AG04450 (cell line): ENCODE measurements at regions of chr1 and their contacts with region 1.

Region 1: DNA sequence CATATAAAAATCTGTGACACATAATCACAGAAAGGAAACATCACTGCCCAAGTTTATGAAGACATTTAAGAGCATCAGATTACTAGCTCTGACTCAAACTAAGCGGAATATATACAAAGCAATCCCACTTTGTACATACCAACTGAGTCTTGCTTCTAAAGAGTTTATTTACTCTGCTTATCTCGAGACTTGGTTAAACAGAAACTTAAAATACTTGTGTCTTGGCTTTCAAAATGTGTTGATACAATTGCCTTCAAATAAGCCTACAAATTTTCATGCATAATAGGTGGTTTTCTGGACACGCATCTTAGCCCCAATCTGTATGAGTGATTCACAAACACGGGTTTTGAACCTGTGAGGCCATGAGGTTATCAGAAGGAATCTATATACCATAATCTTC is 21.0 kb downstream of the CD160 start:
- DNase-seq: peak; percentile 78
- H3K4me3 ChIP-seq: no peak overlapping the region
- H3K27ac ChIP-seq: no peak overlapping the region
- H3K27me3 ChIP-seq: no peaks in the 10 kb centered on the region
- CTCF ChIP-seq: no peak

Region 2: DNA sequence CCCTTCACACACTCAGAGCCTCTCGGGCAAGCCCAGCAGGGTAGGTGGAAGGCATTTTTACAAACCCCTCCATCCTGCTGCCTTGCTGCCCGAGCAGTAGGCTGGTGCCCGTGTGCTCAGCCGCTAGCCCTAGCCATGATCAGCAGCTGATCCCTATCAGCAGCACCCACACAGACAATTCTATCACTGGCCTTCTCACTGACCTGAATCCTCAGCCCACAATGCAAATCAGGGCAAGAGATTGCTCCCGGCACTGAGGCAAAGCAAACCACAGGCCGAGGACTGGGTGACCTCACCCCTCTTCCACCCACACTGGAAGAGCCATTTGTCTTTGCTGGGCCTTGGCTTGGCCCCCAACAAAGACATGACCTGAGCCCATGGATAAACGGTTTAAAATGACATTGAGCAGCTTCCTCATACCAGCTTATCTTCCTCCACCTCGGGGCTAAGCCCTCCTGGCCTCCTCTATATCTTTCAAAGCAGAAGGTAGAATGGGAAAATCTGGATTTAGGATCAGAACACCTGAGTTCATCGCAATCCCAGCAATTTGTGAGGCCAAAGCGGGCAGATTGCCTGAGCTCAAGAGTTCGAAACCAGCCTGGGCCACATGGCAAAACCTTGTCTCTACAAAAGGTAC is 32.1 kb before region 1 on chr1:
- CTCF ChIA-PET with region 1: no interaction called
- POLR2A ChIA-PET with region 1: no interaction called
- DNase-seq: peak; percentile 33
- H3K4me3 ChIP-seq: no peak overlapping the region
- H3K27ac ChIP-seq: peak overlapping the region; percentile 31
- H3K27me3 ChIP-seq: no peaks in the 10 kb centered on the region
- CTCF ChIP-seq: no peak

Region 3: GRCh38 chr1:145720877-145721671 is 19.2 kb before region 1 on chr1:
- CTCF ChIA-PET with region 1: interaction called, 12 read pairs
- POLR2A ChIA-PET with region 1: interaction called, 4 read pairs
- DNase-seq: peak; percentile 29
- H3K4me3 ChIP-seq: peak overlapping the region; percentile 36
- H3K27ac ChIP-seq: peak overlapping the region; percentile 84
- H3K27me3 ChIP-seq: no peaks in the 10 kb centered on the region
- CTCF ChIP-seq: peak; percentile 82

Region 4: DNA sequence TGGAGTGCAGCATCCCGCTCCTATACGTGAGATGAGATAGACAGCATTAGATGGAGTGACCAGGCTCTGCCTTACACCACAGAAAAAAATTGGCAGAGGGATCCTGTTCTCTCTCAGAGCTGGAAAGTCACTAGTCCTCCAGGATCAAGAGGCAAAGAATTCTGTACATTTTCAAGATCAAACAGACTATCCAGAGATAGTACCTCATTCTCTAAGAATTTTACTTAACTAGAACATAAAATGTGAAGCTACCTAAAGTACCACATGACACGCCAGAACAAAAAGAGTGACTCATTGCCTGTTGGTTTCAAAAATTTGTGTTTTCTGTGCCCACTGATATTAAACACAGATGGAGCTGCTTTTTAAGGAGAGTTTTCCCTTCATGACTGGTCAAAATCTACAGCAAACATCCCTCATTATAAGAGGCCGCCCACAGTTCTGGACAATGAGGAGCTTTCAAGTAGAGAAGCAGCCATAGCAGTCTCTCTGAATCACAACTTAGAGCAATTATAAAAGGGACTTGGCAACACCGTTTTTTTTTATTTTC is 11.3 kb after region 1 on chr1:
- CTCF ChIA-PET with region 1: no interaction called
- POLR2A ChIA-PET with region 1: interaction called, 20 read pairs
- DNase-seq: peak; percentile 83
- H3K4me3 ChIP-seq: peak overlapping the region; percentile 25; the same call in 1 of the 2 replicates
- H3K27ac ChIP-seq: peak overlapping the region; percentile 97
- H3K27me3 ChIP-seq: no peaks in the 10 kb centered on the region
- CTCF ChIP-seq: no peak

Region 5: GRCh38 chr1:145795257-145795881 is 55.1 kb after region 1 on chr1:
- CTCF ChIA-PET with region 1: no interaction called
- POLR2A ChIA-PET with region 1: no interaction called
- DNase-seq: no peak
- H3K4me3 ChIP-seq: no peak overlapping the region
- H3K27ac ChIP-seq: no peak overlapping the region
- H3K27me3 ChIP-seq: no peaks in the 10 kb centered on the region
- CTCF ChIP-seq: no peak